ENCODE measurements at regions of chr6 and their contacts with region 1.

Region 1: DNA sequence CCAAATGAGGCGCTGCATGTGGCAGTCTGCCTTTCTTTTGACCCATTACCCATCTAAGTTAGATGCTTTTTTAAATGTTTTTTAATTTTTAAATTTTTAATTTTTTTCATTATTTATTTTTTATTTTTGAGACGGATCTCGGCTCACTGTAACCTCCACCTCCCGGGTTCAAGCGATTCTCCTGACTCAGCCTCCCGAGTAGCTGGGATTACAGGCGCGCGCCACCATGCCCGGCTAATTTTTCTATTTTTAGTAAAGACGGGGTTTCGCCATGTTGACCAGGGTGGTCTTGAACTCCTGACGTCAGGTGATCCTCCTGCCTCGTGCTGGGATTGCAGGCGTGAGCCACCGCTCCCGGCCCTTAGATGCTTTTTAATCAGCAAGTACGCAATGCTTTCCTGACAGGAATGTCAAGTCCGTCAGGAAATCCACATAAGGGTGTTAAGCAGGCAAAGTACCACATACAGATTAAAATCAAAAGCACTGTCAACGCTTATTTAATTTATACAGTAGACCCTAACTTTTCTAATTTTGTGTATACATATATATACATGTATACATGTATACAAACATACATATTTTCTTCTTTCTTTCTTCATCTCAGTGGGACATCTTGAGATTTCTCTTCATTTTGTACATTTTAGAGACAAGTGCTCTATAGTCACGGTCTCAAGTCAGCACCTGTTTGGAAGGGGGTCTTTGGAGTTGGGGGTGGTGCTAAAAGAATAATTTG is 995 bp upstream of the GSTA4 start:
- DNase-seq: peak; percentile 27 to 70
- ATAC-seq: peak in 1 of 3 donors; percentile 1
- H3K4me3 ChIP-seq: peak overlapping the region; percentile 14
- H3K4me3 Mint-ChIP-seq: peak overlapping the region; percentile 92
- H3K27ac ChIP-seq: peak overlapping the region; percentile 36
- H3K27ac Mint-ChIP-seq: peak overlapping the region; percentile 95 to 99
- H3K4me1 ChIP-seq: peaks cover 16% of the 10 kb centered on the region
- H3K4me1 Mint-ChIP-seq: peaks cover 32% of the 10 kb centered on the region in 2 donors
- H3K27me3 ChIP-seq: no peaks in the 10 kb centered on the region
- H3K27me3 Mint-ChIP-seq: peaks cover 0 to 6% of the 10 kb centered on the region in 2 donors
- CTCF ChIP-seq: no peak

Region 2: GRCh38 chr6:52881996-52882841 is 113.9 kb before region 1 on chr6:
- intact Hi-C with region 1: loop called (anchors 5 kb)
- DNase-seq: peak; percentile 43 to 82
- ATAC-seq: peak; percentile 96 to 100 (median 100)
- H3K4me3 ChIP-seq: peak overlapping the region; percentile 40
- H3K4me3 Mint-ChIP-seq: peak overlapping the region; percentile 87
- H3K27ac ChIP-seq: no peak overlapping the region
- H3K27ac Mint-ChIP-seq: peak overlapping the region in 1 of 2 donors; percentile 79
- H3K4me1 ChIP-seq: peaks cover 6% of the 10 kb centered on the region
- H3K4me1 Mint-ChIP-seq: peaks cover 6 to 8% of the 10 kb centered on the region in 2 donors
- H3K27me3 ChIP-seq: no peaks in the 10 kb centered on the region
- H3K27me3 Mint-ChIP-seq: peaks cover 0 to 3% of the 10 kb centered on the region in 2 donors
- CTCF ChIP-seq: peak; percentile 75

Region 3: DNA sequence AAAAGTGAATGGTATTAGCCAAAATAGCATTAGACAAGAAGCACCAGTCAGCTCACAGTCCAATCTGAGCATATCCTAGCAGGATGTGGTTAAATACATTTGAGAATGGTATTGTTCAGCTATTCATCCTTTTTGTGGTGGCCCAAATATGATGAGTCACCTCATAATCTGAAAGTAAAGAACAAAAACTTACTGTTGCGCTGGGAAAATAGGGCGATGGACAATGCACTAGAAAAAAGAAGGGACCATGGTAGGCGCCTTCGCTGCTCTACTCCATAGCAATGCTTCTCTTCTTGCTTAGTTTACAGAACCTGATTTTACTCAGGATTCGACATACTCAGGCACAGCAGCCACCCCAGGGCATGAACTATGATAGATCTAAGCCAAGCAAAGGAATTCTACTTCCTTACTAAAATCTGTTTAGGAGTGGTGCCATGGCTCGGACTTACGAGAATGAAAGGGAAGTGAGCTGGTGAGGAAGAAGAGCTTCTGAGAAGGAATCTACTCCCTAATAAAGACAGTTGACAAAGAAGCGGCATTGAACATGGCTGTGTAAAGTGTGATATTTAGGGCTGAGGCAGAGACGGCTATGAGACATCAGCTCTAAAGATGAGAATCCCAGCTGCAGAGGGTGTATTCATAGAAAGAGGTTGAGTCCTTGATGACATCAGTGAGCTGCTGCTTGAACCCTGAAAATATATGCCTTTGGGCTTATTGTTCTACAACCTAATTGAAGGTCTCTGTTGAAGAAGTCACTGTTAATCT is 52.5 kb after region 1 on chr6:
- intact Hi-C with region 1: loop called (anchors 5 kb)
- DNase-seq: peak in 1 of 2 donors; percentile 50
- ATAC-seq: peak; percentile 86 to 96 (median 92)
- H3K4me3 ChIP-seq: peak overlapping the region; percentile 15
- H3K4me3 Mint-ChIP-seq: peak overlapping the region; percentile 89
- H3K27ac ChIP-seq: peak overlapping the region; percentile 22
- H3K27ac Mint-ChIP-seq: peak overlapping the region; percentile 73 to 82
- H3K4me1 ChIP-seq: peaks cover 5% of the 10 kb centered on the region
- H3K4me1 Mint-ChIP-seq: peaks cover 21 to 27% of the 10 kb centered on the region in 2 donors
- H3K27me3 ChIP-seq: no peaks in the 10 kb centered on the region
- H3K27me3 Mint-ChIP-seq: no peaks in the 10 kb centered on the region
- CTCF ChIP-seq: no peak